Heart right ventricle (tissue), 16 donors: ENCODE measurements at regions of chr1 and their contacts with region 1.

Region 1: DNA sequence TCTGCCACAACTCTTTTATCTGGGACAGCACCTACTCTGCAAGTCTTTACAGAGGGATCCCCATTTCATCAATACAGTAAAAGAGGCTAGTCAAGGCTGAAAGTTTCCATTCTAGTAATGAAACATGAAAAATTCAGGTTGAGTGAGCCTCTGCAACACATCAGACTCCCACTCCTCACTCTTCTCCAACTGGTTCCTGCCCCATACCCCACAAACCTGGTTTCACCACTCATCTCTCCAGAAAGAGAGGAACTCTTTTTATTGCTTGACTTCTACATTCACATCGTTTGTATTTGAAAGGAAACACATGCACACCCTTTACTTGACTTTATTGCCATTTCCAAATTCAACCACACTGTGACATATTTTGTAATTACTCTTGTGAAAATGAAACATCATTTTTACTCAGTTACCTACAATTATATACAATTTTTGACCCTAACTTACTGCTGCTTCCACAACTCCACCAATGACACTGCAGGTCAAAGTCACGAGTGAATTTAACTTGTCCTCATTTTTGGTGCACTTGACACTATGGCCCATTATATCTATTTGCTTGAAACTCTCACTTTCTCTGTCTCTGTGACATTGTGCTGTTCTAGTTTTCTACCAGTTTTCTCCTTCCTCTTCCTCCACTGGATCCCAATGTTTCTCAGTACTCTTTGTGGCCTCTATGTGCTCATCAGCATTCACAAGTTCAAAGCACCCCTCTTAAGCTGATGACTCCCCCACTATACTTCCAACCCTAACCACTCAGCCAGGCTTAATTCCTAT is 8.0 kb downstream of the STX6 start:
- DNase-seq: no peak
- ATAC-seq: no peak
- H3K4me3 ChIP-seq: no peak overlapping the region
- H3K27ac ChIP-seq: peak overlapping the region in 1 of 10 donors; percentile 60
- H3K4me1 ChIP-seq: peaks cover 3 to 70% (median 20%) of the 10 kb centered on the region in 9 donors
- H3K27me3 ChIP-seq: no peaks in the 10 kb centered on the region
- CTCF ChIP-seq: no peak

Region 2: GRCh38 chr1:180969434-180969833 is 45.2 kb before region 1 on chr1:
- intact Hi-C with region 1: loop called in 1 of 10 experiments (anchors 5 kb)
- DNase-seq: no peak
- ATAC-seq: peak in 2 of 8 donors; percentile 18 to 19
- H3K4me3 ChIP-seq: no peak overlapping the region
- H3K27ac ChIP-seq: no peak overlapping the region
- H3K4me1 ChIP-seq: peaks cover 0 to 29% (median 12%) of the 10 kb centered on the region in 9 donors
- H3K27me3 ChIP-seq: no peaks in the 10 kb centered on the region
- CTCF ChIP-seq: no peak

Region 3: GRCh38 chr1:181206513-181206912 is 191.8 kb after region 1 on chr1:
- intact Hi-C with region 1: no loop called
- DNase-seq: peak; percentile 30 to 31
- ATAC-seq: peak; percentile 59 to 92 (median 81)
- H3K4me3 ChIP-seq: no peak overlapping the region
- H3K27ac ChIP-seq: peak overlapping the region in 6 of 10 donors; percentile 35 to 67 (median 52)
- H3K4me1 ChIP-seq: peaks cover 0 to 19% (median 4%) of the 10 kb centered on the region in 9 donors
- H3K27me3 ChIP-seq: no peaks in the 10 kb centered on the region
- CTCF ChIP-seq: no peak